GM12878 (cell line): ENCODE measurements at regions of chr1 and their contacts with region 1.

Region 1: DNA sequence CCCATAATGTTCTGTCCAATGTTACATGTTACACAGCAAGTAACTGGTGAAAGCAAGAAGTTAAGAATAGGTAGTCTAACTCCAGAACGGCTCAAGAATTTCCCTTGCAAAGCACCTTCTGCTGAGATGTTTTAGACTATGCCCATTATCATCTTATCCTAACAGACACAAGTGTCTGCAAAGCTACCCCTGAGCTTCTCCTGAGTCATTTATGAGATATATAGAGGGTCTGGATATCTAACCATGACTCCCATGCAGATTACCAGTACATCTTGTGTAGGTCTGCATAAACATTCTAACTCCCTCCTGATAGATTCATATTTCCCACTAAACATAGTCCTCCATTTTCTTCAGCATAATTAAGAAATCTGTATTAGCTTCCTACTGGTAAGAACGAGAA is 171.7 kb downstream of the COQ8A start:
- DNase-seq: no peak
- ATAC-seq: no peak
- H3K4me3 ChIP-seq: no peak overlapping the region
- H3K27ac ChIP-seq: no peak overlapping the region
- H3K4me1 ChIP-seq: no peaks in the 10 kb centered on the region
- H3K27me3 ChIP-seq: peaks cover 0 to 2% of the 10 kb centered on the region in 2 experiments; a peak in 1 of 4 replicates
- CTCF ChIP-seq: no peak
- EP300 ChIP-seq: no peak
- POLR2A ChIP-seq: no peak
- RAD21 ChIP-seq: no peak

Region 2: DNA sequence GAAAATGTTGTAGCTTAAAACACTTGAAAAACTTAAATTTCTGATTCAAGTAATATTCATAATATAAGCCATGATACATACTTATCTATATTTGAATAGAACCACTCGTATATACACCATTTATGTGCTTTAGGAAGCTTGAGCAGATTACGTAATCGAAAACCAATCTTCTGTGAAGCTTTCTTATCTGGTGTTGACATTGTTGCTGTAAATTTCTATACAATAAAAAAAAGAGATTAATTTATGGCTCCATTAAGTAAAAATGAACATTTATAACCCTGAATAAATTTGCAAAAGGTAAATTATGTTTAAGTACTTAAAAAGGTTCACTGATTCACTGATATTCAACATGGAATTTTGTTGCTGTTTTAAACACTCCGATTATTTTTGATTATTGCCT is 824.2 kb before region 1 on chr1:
- CTCF ChIA-PET with region 1: no interaction called
- POLR2A ChIA-PET with region 1: interaction called, 11 read pairs
- RAD21 ChIA-PET with region 1: no interaction called
- SMC1A ChIA-PET with region 1: no interaction called
- in situ Hi-C with region 1: no loop called
- intact Hi-C with region 1: no loop called
- DNase-seq: no peak
- ATAC-seq: no peak
- H3K4me3 ChIP-seq: no peak overlapping the region
- H3K27ac ChIP-seq: no peak overlapping the region
- H3K4me1 ChIP-seq: no peaks in the 10 kb centered on the region
- H3K27me3 ChIP-seq: no peaks in the 10 kb centered on the region
- CTCF ChIP-seq: no peak
- EP300 ChIP-seq: no peak
- POLR2A ChIP-seq: no peak
- RAD21 ChIP-seq: no peak

Region 3: DNA sequence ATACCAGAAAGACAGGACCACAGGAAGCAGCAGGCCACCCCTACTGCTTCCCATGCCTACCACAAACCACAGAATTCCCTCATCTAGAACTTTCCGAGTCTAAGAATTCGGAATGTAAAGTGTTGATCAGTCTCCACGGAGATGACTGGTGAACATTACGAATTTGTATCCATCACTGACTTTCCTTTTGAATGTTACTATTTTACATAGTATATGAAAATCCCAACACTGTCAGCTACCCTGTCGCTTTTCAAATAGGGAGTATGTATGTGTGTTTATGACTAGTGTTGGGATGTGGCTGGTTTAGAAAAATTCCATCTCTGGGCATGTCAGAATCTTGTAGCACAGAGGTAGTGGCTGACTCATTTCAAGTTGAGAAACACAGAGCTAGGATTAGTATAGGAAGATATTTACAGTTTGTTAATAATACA is 53.4 kb before region 1 on chr1:
- CTCF ChIA-PET with region 1: no interaction called
- POLR2A ChIA-PET with region 1: no interaction called
- RAD21 ChIA-PET with region 1: no interaction called
- SMC1A ChIA-PET with region 1: no interaction called
- in situ Hi-C with region 1: no loop called
- intact Hi-C with region 1: no loop called
- DNase-seq: no peak
- ATAC-seq: no peak
- H3K4me3 ChIP-seq: no peak overlapping the region
- H3K27ac ChIP-seq: no peak overlapping the region
- H3K4me1 ChIP-seq: no peaks in the 10 kb centered on the region
- H3K27me3 ChIP-seq: no peaks in the 10 kb centered on the region
- CTCF ChIP-seq: no peak
- EP300 ChIP-seq: no peak
- POLR2A ChIP-seq: no peak
- RAD21 ChIP-seq: no peak

Region 4: DNA sequence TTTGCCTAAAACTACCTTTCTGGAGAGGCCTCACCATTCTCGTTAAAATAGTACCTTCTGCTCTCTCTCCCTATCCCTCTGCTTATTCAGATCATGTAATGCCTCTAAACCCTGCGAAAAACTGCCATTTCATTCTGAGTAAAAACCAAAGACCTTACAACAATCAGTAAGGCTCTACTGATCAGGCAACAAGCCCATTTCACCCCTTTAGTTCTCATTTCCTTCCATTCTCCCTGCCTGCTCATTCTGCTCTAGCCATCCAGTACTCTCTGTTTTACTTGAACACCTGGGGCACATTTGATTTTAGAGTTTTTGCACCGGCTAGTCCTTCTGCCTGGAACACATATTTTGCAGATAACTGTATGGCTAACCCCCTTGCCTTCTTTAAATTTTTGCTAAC is 16.1 kb after region 1 on chr1:
- CTCF ChIA-PET with region 1: no interaction called
- POLR2A ChIA-PET with region 1: no interaction called
- RAD21 ChIA-PET with region 1: no interaction called
- SMC1A ChIA-PET with region 1: interaction called, 10 read pairs
- in situ Hi-C with region 1: no loop called
- intact Hi-C with region 1: no loop called
- DNase-seq: peak; percentile 12
- ATAC-seq: peak; percentile 45
- H3K4me3 ChIP-seq: no peak overlapping the region
- H3K27ac ChIP-seq: no peak overlapping the region
- H3K4me1 ChIP-seq: no peaks in the 10 kb centered on the region
- H3K27me3 ChIP-seq: no peaks in the 10 kb centered on the region
- CTCF ChIP-seq: no peak
- EP300 ChIP-seq: no peak
- POLR2A ChIP-seq: no peak
- RAD21 ChIP-seq: no peak

Region 5: DNA sequence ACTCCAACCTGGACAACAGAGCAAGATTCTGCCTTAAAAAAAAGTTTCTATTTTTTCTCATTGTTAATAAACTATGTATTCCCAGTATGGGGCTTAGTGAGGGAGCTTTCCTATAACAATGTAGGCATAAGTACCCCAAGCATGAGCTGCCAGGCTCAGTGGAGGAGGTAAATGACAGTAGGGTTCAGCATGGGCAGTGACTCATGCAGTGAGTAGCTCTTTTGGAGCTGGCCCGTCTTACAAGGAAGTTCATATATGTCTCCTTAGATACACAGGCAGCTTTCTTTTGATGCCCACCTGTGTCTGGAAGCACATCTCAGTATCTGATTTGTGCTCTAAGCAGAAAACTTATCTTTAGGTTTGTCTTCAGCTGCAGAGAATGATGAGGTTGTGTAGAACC is 509.4 kb after region 1 on chr1:
- CTCF ChIA-PET with region 1: no interaction called
- POLR2A ChIA-PET with region 1: no interaction called
- RAD21 ChIA-PET with region 1: no interaction called
- SMC1A ChIA-PET with region 1: no interaction called
- in situ Hi-C with region 1: no loop called
- intact Hi-C with region 1: no loop called
- DNase-seq: no peak
- ATAC-seq: no peak
- H3K4me3 ChIP-seq: no peak overlapping the region
- H3K27ac ChIP-seq: no peak overlapping the region
- H3K4me1 ChIP-seq: no peaks in the 10 kb centered on the region
- H3K27me3 ChIP-seq: no peaks in the 10 kb centered on the region
- CTCF ChIP-seq: no peak
- EP300 ChIP-seq: no peak
- POLR2A ChIP-seq: no peak
- RAD21 ChIP-seq: no peak